HepG2 (cell line): ENCODE measurements at regions of chr1 and their contacts with region 1.

Region 1: DNA sequence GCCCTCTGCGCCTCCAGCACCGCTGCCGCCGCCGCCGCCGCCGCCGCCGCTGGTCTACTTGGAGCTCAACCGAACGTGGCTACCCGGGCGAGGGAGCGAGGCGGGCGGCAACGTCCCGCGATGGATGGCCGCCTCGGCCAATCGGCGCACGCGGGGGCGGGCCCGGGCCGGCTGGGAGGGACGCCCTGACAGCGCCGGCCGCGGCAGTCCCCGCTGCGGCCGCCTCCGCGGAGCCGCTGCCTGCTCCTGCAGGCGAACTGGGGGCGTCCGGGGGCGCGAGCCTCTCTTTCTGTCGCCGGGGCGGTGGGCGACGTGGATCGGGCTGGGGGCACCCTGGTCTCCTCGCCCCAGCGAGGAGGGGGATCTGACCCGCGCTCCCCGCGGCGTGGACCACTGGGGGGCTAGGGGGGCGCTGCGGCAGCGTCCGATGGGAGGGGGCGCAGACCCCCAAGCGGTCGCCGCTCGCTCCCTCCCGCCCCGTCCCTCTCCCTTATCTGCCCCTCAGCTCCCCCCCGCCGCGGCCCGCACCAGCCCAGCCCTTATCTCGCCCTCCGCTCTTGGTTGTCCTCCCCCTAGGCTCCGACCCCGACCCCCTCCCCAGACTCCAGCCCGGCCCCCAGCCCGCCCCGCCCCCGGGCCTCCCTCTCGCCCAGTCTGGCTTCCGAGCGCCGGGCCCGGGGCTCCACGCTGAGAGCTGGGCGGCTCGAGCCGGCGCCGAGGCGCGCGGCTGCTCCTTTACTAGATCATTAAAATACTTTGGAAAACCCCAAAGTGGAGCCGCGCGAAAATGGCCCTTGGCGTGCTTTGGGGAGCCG is at the start of gene SSBP3:
- DNase-seq: peak; percentile 79
- ATAC-seq: peak; percentile 93
- H3K4me3 ChIP-seq: peak within 1 kb of the TSS; percentile 73 to 97 (median 84)
- H3K27ac ChIP-seq: peak within 1 kb of the TSS; percentile 61
- H3K4me1 ChIP-seq: peaks cover 59% of the 10 kb centered on the region
- H3K27me3 ChIP-seq: no peaks in the 10 kb centered on the region; a peak in 1 of 5 replicates
- CTCF ChIP-seq: peak; percentile 26; the same call in 1 of the 2 replicates
- EP300 ChIP-seq: no peak
- POLR2A ChIP-seq: peak in 1 of 2 experiments; percentile 38; a peak in 1 of 4 replicates
- RAD21 ChIP-seq: peak; percentile 43; the same call in 1 of the 2 replicates
- total RNA-seq, gene SSBP3: 7.5 and 8.5 TPM in 2 replicates

Region 2: GRCh38 chr1:54199765-54200518 is 206.6 kb before region 1 on chr1 and contains the starts of genes CYB5RL and MRPL37:
- CTCF ChIA-PET with region 1: no interaction called
- POLR2A ChIA-PET with region 1: interaction called, 10 read pairs
- in situ Hi-C with region 1: no loop called
- intact Hi-C with region 1: no loop called
- DNase-seq: peak; percentile 97
- ATAC-seq: peak; percentile 96
- H3K4me3 ChIP-seq: peak within 1 kb of the TSS; percentile 89 to 95 (median 94)
- H3K27ac ChIP-seq: peak within 1 kb of the TSS; percentile 77
- H3K4me1 ChIP-seq: peaks cover 34% of the 10 kb centered on the region
- H3K27me3 ChIP-seq: no peaks in the 10 kb centered on the region; a peak in 1 of 5 replicates
- CTCF ChIP-seq: no peak
- EP300 ChIP-seq: no peak
- POLR2A ChIP-seq: peak; percentile 82 to 84
- RAD21 ChIP-seq: peak; percentile 28
- total RNA-seq, gene CYB5RL: 4.1 and 5.0 TPM in 2 replicates
- total RNA-seq, gene MRPL37: 127 and 143 TPM in 2 replicates

Region 3: DNA sequence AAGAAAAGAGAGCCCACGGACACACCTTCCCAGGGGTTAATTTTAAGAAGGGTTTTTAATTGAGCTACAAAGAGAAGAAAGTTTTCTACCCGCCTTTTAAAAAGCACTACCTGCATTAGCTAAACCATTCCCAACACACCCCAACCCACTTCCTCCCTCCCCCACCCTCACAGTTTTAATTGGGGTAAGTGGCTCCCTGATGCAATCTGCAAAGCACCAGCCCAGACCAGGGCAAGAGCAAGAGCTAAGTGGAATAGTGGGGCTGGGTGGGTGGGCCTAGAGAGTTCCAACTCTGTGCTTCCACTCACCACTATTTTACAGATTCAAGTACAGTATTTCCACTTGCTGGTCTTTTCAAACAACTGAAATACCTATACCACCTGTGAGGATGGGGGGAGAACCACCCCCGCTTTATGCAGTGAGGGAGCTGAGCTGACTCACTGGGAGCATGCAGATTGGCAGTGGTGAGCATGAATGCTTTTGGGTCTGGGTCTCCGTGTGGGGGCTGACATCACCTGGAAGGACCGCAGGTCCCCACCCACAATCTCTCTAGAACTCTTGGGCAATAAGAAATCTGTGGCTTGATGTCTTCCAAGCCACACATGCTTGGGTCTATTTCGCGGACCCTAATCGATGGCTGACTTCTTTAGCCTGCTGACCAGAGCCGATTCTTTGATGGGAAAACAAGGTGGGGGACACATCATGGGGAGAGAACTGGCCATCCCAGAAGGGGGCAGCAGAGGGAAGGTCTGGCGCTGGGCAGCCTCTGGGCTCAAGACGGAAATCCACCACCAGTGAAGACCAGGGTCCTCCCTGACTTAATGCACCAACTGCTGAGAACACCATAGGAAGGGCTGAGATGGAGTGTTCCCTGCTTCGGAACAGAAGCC is 95.9 kb before region 1 on chr1:
- CTCF ChIA-PET with region 1: interaction called, 5 read pairs
- POLR2A ChIA-PET with region 1: no interaction called
- in situ Hi-C with region 1: no loop called
- intact Hi-C with region 1: loop called (anchors 2 kb)
- DNase-seq: peak; percentile 39
- ATAC-seq: peak; percentile 84
- H3K4me3 ChIP-seq: no peak overlapping the region
- H3K27ac ChIP-seq: no peak overlapping the region
- H3K4me1 ChIP-seq: peaks cover 9% of the 10 kb centered on the region; the same call in 1 of the 2 replicates
- H3K27me3 ChIP-seq: no peaks in the 10 kb centered on the region
- CTCF ChIP-seq: peak; percentile 83
- EP300 ChIP-seq: no peak
- POLR2A ChIP-seq: no peak
- RAD21 ChIP-seq: peak; percentile 88

Region 4: DNA sequence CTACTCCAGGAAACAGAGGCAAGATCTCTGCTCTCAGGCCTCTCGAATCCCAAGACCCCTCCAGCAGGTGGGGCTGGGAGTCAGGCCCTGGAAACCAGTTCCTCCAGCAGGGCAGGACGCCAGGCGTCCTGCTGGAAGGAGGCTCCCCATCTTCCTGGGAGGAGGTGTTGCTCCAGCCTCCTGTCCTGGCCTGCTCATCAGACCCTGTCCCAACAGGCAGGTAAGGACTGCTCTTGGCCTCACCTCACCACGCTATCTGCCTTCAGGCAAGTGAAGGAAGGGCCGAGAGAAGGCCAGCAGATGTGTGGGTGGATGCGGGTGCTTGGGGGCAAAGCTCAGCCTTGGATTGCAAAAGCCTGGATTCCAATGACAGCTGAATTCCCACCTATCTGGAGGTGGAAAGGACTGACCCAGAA is 83.2 kb before region 1 on chr1:
- CTCF ChIA-PET with region 1: no interaction called
- POLR2A ChIA-PET with region 1: interaction called, 6 read pairs
- in situ Hi-C with region 1: loop called (anchors 5 kb)
- intact Hi-C with region 1: no loop called
- DNase-seq: peak; percentile 64
- ATAC-seq: peak; percentile 94
- H3K4me3 ChIP-seq: peak overlapping the region in 1 of 3 experiments; percentile 54; a peak in 1 of 6 replicates
- H3K27ac ChIP-seq: no peak overlapping the region
- H3K4me1 ChIP-seq: peaks cover 33% of the 10 kb centered on the region
- H3K27me3 ChIP-seq: no peaks in the 10 kb centered on the region
- CTCF ChIP-seq: peak; percentile 61
- EP300 ChIP-seq: peak in 1 of 2 experiments; percentile 48; a peak in 1 of 4 replicates
- POLR2A ChIP-seq: no peak
- RAD21 ChIP-seq: peak; percentile 53

Region 5: GRCh38 chr1:54355931-54356679 is 50.4 kb before region 1 on chr1:
- CTCF ChIA-PET with region 1: no interaction called
- POLR2A ChIA-PET with region 1: interaction called, 11 read pairs
- in situ Hi-C with region 1: no loop called
- intact Hi-C with region 1: no loop called
- DNase-seq: peak; percentile 34
- ATAC-seq: peak; percentile 70
- H3K4me3 ChIP-seq: peak overlapping the region; percentile 46 to 70 (median 49)
- H3K27ac ChIP-seq: peak overlapping the region; percentile 66
- H3K4me1 ChIP-seq: peaks cover 47% of the 10 kb centered on the region
- H3K27me3 ChIP-seq: no peaks in the 10 kb centered on the region
- CTCF ChIP-seq: no peak
- EP300 ChIP-seq: no peak
- POLR2A ChIP-seq: no peak
- RAD21 ChIP-seq: no peak